B cell (primary cell): ENCODE measurements at regions of chr11 and their contacts with region 1.

Region 1: GRCh38 chr11:61891331-61892084 is at the start of gene FADS3:
- DNase-seq: peak; percentile 96
- ATAC-seq: peak; percentile 61
- H3K4me3 ChIP-seq: peak within 1 kb of the TSS; percentile 13 to 84 (median 72)
- H3K4me3 Mint-ChIP-seq: peak within 1 kb of the TSS; percentile 94
- H3K27ac ChIP-seq: peak within 1 kb of the TSS; percentile 79 to 91
- H3K27ac Mint-ChIP-seq: peak within 1 kb of the TSS; percentile 96
- H3K4me1 ChIP-seq: peaks cover 18 to 29% of the 10 kb centered on the region in 2 donors
- H3K4me1 Mint-ChIP-seq: peaks cover 38% of the 10 kb centered on the region
- H3K27me3 ChIP-seq: no peaks in the 10 kb centered on the region
- H3K27me3 Mint-ChIP-seq: no peaks in the 10 kb centered on the region
- CTCF ChIP-seq: peak; percentile 47
- total RNA-seq, gene FADS3: 224 and 225 TPM in 2 replicates

Region 2: GRCh38 chr11:61747192-61747966 is 144.1 kb before region 1 on chr11:
- CTCF ChIA-PET with region 1: no interaction called
- POLR2A ChIA-PET with region 1: no interaction called
- intact Hi-C with region 1: no loop called
- DNase-seq: peak; percentile 60
- ATAC-seq: peak; percentile 48
- H3K4me3 ChIP-seq: no peak overlapping the region
- H3K4me3 Mint-ChIP-seq: no peak overlapping the region
- H3K27ac ChIP-seq: no peak overlapping the region
- H3K27ac Mint-ChIP-seq: no peak overlapping the region
- H3K4me1 ChIP-seq: peaks cover 4 to 5% of the 10 kb centered on the region in 2 donors
- H3K4me1 Mint-ChIP-seq: peaks cover 2% of the 10 kb centered on the region
- H3K27me3 ChIP-seq: peaks cover 0 to 35% (median 13%) of the 10 kb centered on the region in 4 experiments
- H3K27me3 Mint-ChIP-seq: peaks cover 21% of the 10 kb centered on the region
- CTCF ChIP-seq: peak; percentile 76

Region 3: GRCh38 chr11:61816736-61817455 is 74.6 kb before region 1 on chr11 and contains the start of gene FADS1:
- CTCF ChIA-PET with region 1: interaction called, 4 read pairs
- POLR2A ChIA-PET with region 1: no interaction called
- intact Hi-C with region 1: loop called (anchors 5 kb)
- DNase-seq: peak; percentile 83
- ATAC-seq: peak; percentile 65
- H3K4me3 ChIP-seq: peak within 1 kb of the TSS; percentile 56 to 77 (median 70)
- H3K4me3 Mint-ChIP-seq: peak within 1 kb of the TSS; percentile 96
- H3K27ac ChIP-seq: no peak within 1 kb of the TSS
- H3K27ac Mint-ChIP-seq: peak within 1 kb of the TSS; percentile 83
- H3K4me1 ChIP-seq: peaks cover 9 to 24% of the 10 kb centered on the region in 2 donors
- H3K4me1 Mint-ChIP-seq: peaks cover 15% of the 10 kb centered on the region
- H3K27me3 ChIP-seq: peaks cover 0 to 17% (median 4%) of the 10 kb centered on the region in 4 experiments
- H3K27me3 Mint-ChIP-seq: no peaks in the 10 kb centered on the region
- CTCF ChIP-seq: peak; percentile 53
- total RNA-seq, gene FADS1: 14.8 and 15.6 TPM in 2 replicates

Region 4: DNA sequence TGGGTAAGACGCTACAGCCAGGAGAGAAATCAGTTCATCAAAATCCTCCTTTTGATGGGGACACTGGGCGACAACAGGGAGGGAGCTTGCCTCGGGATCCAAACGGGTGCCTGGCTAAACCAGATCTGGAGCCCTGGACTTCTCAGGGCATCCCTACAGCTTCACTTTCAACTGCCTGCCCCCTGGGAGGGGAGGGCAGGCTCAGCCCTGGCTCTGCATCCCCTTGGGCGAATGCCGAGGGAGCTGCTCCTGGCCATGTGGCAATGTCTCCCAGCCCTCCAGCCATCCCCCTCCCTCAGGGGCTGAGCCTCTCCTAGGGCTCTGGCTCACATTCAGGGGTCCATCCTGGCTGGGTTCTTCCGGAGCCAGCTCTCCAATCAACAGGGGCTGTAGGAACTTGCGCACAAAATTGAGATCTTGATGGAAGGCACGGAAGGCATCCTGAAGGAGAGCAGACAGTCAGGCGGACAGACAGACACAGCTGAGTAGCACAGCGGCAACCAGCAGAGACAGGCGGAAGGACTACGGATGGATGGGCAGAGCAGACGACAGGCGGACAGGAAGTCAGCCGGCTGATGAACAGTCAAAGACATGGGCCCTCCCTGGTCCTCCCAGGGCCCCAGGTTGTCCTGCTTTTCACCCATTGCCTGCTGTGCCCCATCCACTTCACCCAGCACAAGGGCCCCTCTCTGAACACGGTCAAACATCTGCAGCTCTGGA is 11.6 kb before region 1 on chr11:
- CTCF ChIA-PET with region 1: interaction called, 144 read pairs
- POLR2A ChIA-PET with region 1: interaction called, 12 read pairs
- intact Hi-C with region 1: loop called (anchors 1 kb)
- DNase-seq: peak; percentile 64
- ATAC-seq: peak; percentile 67
- H3K4me3 ChIP-seq: peak overlapping the region; percentile 2 to 63 (median 39)
- H3K4me3 Mint-ChIP-seq: peak overlapping the region; percentile 95
- H3K27ac ChIP-seq: peak overlapping the region; percentile 67 to 84
- H3K27ac Mint-ChIP-seq: peak overlapping the region; percentile 95
- H3K4me1 ChIP-seq: peaks cover 29 to 53% of the 10 kb centered on the region in 2 donors
- H3K4me1 Mint-ChIP-seq: peaks cover 54% of the 10 kb centered on the region
- H3K27me3 ChIP-seq: no peaks in the 10 kb centered on the region
- H3K27me3 Mint-ChIP-seq: no peaks in the 10 kb centered on the region
- CTCF ChIP-seq: no peak

Region 5: GRCh38 chr11:61967116-61967923 is 75.8 kb after region 1 on chr11 and contains the start of gene FTH1:
- CTCF ChIA-PET with region 1: interaction called, 59 read pairs
- POLR2A ChIA-PET with region 1: interaction called, 3 read pairs
- intact Hi-C with region 1: loop called (anchors 1 kb)
- DNase-seq: peak; percentile 95
- ATAC-seq: peak; percentile 67
- H3K4me3 ChIP-seq: peak within 1 kb of the TSS; percentile 88 to 99 (median 96)
- H3K4me3 Mint-ChIP-seq: peak within 1 kb of the TSS; percentile 97
- H3K27ac ChIP-seq: peak within 1 kb of the TSS; percentile 86 to 94
- H3K27ac Mint-ChIP-seq: peak within 1 kb of the TSS; percentile 99
- H3K4me1 ChIP-seq: peaks cover 58 to 67% of the 10 kb centered on the region in 2 donors
- H3K4me1 Mint-ChIP-seq: peaks cover 72% of the 10 kb centered on the region
- H3K27me3 ChIP-seq: no peaks in the 10 kb centered on the region
- H3K27me3 Mint-ChIP-seq: no peaks in the 10 kb centered on the region
- CTCF ChIP-seq: no peak
- total RNA-seq, gene FTH1: 1,265 and 1,314 TPM in 2 replicates

Region 6: GRCh38 chr11:62044639-62045121 is 153.2 kb after region 1 on chr11:
- CTCF ChIA-PET with region 1: no interaction called
- POLR2A ChIA-PET with region 1: no interaction called
- intact Hi-C with region 1: loop called (anchors 5 kb)
- DNase-seq: no peak
- ATAC-seq: no peak
- H3K4me3 ChIP-seq: no peak overlapping the region
- H3K4me3 Mint-ChIP-seq: no peak overlapping the region
- H3K27ac ChIP-seq: no peak overlapping the region
- H3K27ac Mint-ChIP-seq: no peak overlapping the region
- H3K4me1 ChIP-seq: peaks cover 22 to 29% of the 10 kb centered on the region in 2 donors
- H3K4me1 Mint-ChIP-seq: peaks cover 32% of the 10 kb centered on the region
- H3K27me3 ChIP-seq: peaks cover 0 to 4% (median 2%) of the 10 kb centered on the region in 4 experiments
- H3K27me3 Mint-ChIP-seq: peaks cover 12% of the 10 kb centered on the region
- CTCF ChIP-seq: no peak